B cell (primary cell): ENCODE measurements at regions of chr5 and their contacts with region 1.

Region 1: GRCh38 chr5:64811050-64811640 is 42.4 kb downstream of the CWC27 start:
- DNase-seq: peak; percentile 56
- ATAC-seq: no peak
- H3K4me3 ChIP-seq: no peak overlapping the region
- H3K4me3 Mint-ChIP-seq: no peak overlapping the region
- H3K27ac ChIP-seq: no peak overlapping the region
- H3K27ac Mint-ChIP-seq: no peak overlapping the region
- H3K4me1 ChIP-seq: no peaks in the 10 kb centered on the region
- H3K4me1 Mint-ChIP-seq: no peaks in the 10 kb centered on the region
- H3K27me3 ChIP-seq: no peaks in the 10 kb centered on the region
- H3K27me3 Mint-ChIP-seq: no peaks in the 10 kb centered on the region
- CTCF ChIP-seq: peak; percentile 73

Region 2: GRCh38 chr5:64958757-64959391 is 147.7 kb after region 1 on chr5:
- CTCF ChIA-PET with region 1: no interaction called
- POLR2A ChIA-PET with region 1: no interaction called
- intact Hi-C with region 1: loop called (anchors 10 kb)
- DNase-seq: peak; percentile 40
- ATAC-seq: no peak
- H3K4me3 ChIP-seq: no peak overlapping the region
- H3K4me3 Mint-ChIP-seq: no peak overlapping the region
- H3K27ac ChIP-seq: no peak overlapping the region
- H3K27ac Mint-ChIP-seq: no peak overlapping the region
- H3K4me1 ChIP-seq: no peaks in the 10 kb centered on the region
- H3K4me1 Mint-ChIP-seq: no peaks in the 10 kb centered on the region
- H3K27me3 ChIP-seq: no peaks in the 10 kb centered on the region
- H3K27me3 Mint-ChIP-seq: no peaks in the 10 kb centered on the region
- CTCF ChIP-seq: peak; percentile 69

Region 3: GRCh38 chr5:65102828-65103711 is 291.9 kb after region 1 on chr5:
- CTCF ChIA-PET with region 1: interaction called, 6 read pairs
- POLR2A ChIA-PET with region 1: no interaction called
- intact Hi-C with region 1: loop called (anchors 1 kb)
- DNase-seq: peak; percentile 80
- ATAC-seq: peak; percentile 86
- H3K4me3 ChIP-seq: peak overlapping the region; percentile 40 to 76 (median 67)
- H3K4me3 Mint-ChIP-seq: peak overlapping the region; percentile 89
- H3K27ac ChIP-seq: peak overlapping the region; percentile 84 to 91
- H3K27ac Mint-ChIP-seq: peak overlapping the region; percentile 93
- H3K4me1 ChIP-seq: peaks cover 23% of the 10 kb centered on the region in 2 donors
- H3K4me1 Mint-ChIP-seq: peaks cover 23% of the 10 kb centered on the region
- H3K27me3 ChIP-seq: no peaks in the 10 kb centered on the region
- H3K27me3 Mint-ChIP-seq: no peaks in the 10 kb centered on the region
- CTCF ChIP-seq: no peak